ENCODE measurements at regions of chr12 and their contacts with region 1.

Region 1: GRCh38 chr12:92570056-92570753 is 132.6 kb upstream of the PLEKHG7 start:
- DNase-seq: peak; percentile 87
- H3K4me3 ChIP-seq: no peak overlapping the region
- H3K27ac ChIP-seq: no peak overlapping the region
- H3K4me1 ChIP-seq: no peaks in the 10 kb centered on the region
- H3K27me3 ChIP-seq: no peaks in the 10 kb centered on the region
- CTCF ChIP-seq: peak; percentile 43 to 45
- POLR2A ChIP-seq: no peak

Region 2: GRCh38 chr12:91361864-91362263 is 1208.3 kb before region 1 on chr12:
- CTCF ChIA-PET with region 1: interaction called, 3 read pairs
- POLR2A ChIA-PET with region 1: no interaction called
- dilution Hi-C with region 1: no loop called
- intact Hi-C with region 1: loop called (anchors 1 kb)
- DNase-seq: peak; percentile 68
- H3K4me3 ChIP-seq: no peak overlapping the region
- H3K27ac ChIP-seq: no peak overlapping the region
- H3K4me1 ChIP-seq: no peaks in the 10 kb centered on the region
- H3K27me3 ChIP-seq: no peaks in the 10 kb centered on the region
- CTCF ChIP-seq: peak; percentile 33 to 39
- POLR2A ChIP-seq: no peak

Region 3: GRCh38 chr12:91985002-91985787 is 585.0 kb before region 1 on chr12:
- CTCF ChIA-PET with region 1: no interaction called
- POLR2A ChIA-PET with region 1: no interaction called
- dilution Hi-C with region 1: no loop called
- intact Hi-C with region 1: loop called (anchors 1 kb)
- DNase-seq: peak; percentile 13
- H3K4me3 ChIP-seq: no peak overlapping the region
- H3K27ac ChIP-seq: no peak overlapping the region
- H3K4me1 ChIP-seq: peaks cover 55% of the 10 kb centered on the region
- H3K27me3 ChIP-seq: no peaks in the 10 kb centered on the region
- CTCF ChIP-seq: no peak
- POLR2A ChIP-seq: no peak

Region 4: GRCh38 chr12:92424338-92424737 is 145.9 kb before region 1 on chr12:
- CTCF ChIA-PET with region 1: interaction called, 3 read pairs
- POLR2A ChIA-PET with region 1: no interaction called
- dilution Hi-C with region 1: no loop called
- intact Hi-C with region 1: loop called (anchors 5 kb)
- DNase-seq: peak; percentile 77
- H3K4me3 ChIP-seq: no peak overlapping the region
- H3K27ac ChIP-seq: no peak overlapping the region
- H3K4me1 ChIP-seq: no peaks in the 10 kb centered on the region
- H3K27me3 ChIP-seq: no peaks in the 10 kb centered on the region
- CTCF ChIP-seq: no peak
- POLR2A ChIP-seq: no peak

Region 5: GRCh38 chr12:92539113-92539749 is 31.0 kb before region 1 on chr12:
- CTCF ChIA-PET with region 1: no interaction called
- POLR2A ChIA-PET with region 1: no interaction called
- dilution Hi-C with region 1: no loop called
- intact Hi-C with region 1: loop called (anchors 1 kb)
- DNase-seq: peak; percentile 95
- H3K4me3 ChIP-seq: no peak overlapping the region
- H3K27ac ChIP-seq: peak overlapping the region; percentile 70
- H3K4me1 ChIP-seq: peaks cover 32% of the 10 kb centered on the region
- H3K27me3 ChIP-seq: no peaks in the 10 kb centered on the region
- CTCF ChIP-seq: no peak
- POLR2A ChIP-seq: no peak

Region 6: DNA sequence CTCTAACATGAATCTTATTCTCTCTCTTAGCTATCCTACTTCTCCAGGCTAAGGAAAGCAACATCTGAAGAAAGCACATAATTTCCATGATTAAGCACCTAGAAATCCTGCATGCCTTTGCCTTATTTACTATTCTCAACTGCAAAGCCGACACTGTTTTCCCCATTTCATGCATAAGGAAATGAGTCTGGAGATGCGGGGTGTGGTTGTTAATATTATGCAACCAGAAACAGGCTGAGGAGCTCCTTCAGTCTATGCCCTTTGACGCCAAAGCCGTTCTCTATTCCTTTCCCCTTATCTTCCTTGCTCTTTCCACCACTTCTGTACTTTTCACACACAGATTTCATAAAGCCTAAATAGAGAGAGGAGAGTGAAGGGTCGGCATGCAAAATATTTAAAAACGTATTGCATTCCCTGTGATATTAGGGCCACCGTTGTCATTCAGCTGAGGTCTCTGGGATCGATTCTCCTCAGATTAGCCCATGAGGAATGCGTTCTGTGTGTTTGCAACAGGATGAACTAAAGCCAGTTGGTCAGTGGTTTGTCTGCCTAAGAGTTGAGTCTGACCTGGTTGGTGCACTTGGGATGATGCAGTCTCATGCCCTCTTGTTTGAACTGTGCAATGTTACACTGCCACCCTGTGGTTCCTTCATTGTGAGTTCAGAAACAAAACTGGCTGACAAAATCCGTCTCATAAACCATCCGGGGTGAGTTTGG is 79.5 kb after region 1 on chr12:
- CTCF ChIA-PET with region 1: interaction called, 12 read pairs
- POLR2A ChIA-PET with region 1: no interaction called
- dilution Hi-C with region 1: no loop called
- intact Hi-C with region 1: loop called (anchors 1 kb)
- DNase-seq: peak; percentile 75
- H3K4me3 ChIP-seq: no peak overlapping the region
- H3K27ac ChIP-seq: no peak overlapping the region
- H3K4me1 ChIP-seq: no peaks in the 10 kb centered on the region
- H3K27me3 ChIP-seq: no peaks in the 10 kb centered on the region
- CTCF ChIP-seq: peak; percentile 69 to 70
- POLR2A ChIP-seq: no peak